H1 (cell line): ENCODE measurements at regions of chr3 and their contacts with region 1.

Region 1: GRCh38 chr3:120469447-120469846 is 18.7 kb upstream of the FSTL1 start:
- DNase-seq: no peak
- H3K4me3 ChIP-seq: peak overlapping the region in 2 of 4 experiments; percentile 7 to 10; a peak in 1 of 8 replicates
- H3K27ac ChIP-seq: peak overlapping the region; percentile 64
- H3K4me1 ChIP-seq: peaks cover 5 to 20% (median 10%) of the 10 kb centered on the region in 4 experiments; a peak in 5 of 7 replicates
- H3K27me3 ChIP-seq: no peaks in the 10 kb centered on the region
- CTCF ChIP-seq: no peak
- EP300 ChIP-seq: peak in 1 of 2 experiments; percentile 87; a peak in 1 of 3 replicates
- POLR2A ChIP-seq: no peak
- RAD21 ChIP-seq: no peak

Region 2: DNA sequence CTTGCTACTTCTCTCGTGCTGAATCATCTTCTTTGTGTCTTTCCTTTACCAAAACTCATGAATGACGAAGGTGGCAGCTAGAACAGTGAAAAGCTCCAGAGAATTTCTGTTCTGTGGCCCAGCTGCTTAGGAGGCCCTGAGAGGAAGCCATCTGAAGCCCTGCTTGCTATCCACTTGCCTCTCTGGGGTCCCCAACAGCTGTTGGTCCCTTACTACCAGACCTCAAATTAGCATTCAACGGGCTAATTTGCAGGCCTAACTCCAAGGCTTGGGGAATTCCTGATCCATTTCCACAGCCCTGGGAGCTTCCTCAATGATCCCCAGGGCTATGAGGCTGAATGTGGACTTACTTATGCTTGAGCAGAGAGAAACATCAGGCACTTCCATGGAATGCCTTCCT is 18.8 kb after region 1 on chr3:
- CTCF ChIA-PET with region 1: interaction called, 3 read pairs
- POLR2A ChIA-PET with region 1: interaction called, 16 read pairs
- DNase-seq: no peak
- H3K4me3 ChIP-seq: no peak overlapping the region
- H3K27ac ChIP-seq: no peak overlapping the region
- H3K4me1 ChIP-seq: peaks cover 0 to 8% (median 5%) of the 10 kb centered on the region in 4 experiments; a peak in 2 of 7 replicates
- H3K27me3 ChIP-seq: no peaks in the 10 kb centered on the region
- CTCF ChIP-seq: no peak
- EP300 ChIP-seq: no peak
- POLR2A ChIP-seq: no peak
- RAD21 ChIP-seq: no peak

Region 3: DNA sequence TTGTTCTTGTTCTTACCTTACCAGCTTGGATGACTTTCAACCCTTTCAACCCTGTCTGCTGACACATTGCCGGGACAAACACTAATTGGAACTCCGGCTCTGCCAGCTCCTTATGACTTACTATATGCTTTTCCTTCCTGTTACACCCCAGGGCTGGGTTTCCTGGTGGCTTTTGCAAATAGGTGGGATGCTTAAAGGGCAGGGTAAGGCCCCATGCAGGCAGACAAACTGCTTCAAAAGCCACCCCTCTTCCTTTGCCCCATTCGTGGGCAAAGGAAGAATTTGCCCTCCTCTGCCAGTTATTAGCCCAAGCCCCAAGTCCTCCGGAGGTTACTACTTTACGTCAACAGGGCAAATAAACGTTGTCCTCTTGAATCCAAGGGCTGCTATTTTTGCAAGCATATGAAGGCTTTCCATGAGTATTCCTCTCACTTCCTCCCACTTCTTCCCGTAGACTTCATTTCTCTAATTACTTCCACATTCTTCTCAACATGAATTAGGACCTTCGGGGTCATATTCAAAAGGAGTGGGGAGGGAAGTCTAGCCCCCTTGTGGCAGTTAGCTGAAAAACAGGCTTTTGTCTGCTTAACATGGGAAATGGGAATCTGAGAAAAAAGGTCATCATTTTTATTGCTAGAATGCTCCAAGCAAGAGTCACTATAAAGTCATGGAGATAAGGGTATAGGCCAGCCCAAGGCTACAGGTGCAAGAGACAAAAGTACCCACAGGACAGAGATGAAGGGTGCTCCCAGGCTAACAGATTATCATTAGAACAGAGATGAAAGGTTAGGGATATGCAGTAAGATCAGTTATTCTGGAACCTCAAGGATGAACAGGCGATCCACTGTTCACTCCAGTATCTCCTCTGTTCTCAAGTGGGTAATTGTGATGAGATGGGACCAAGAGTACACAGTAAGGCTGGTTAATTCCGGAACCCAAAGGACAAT is 37.7 kb after region 1 on chr3:
- CTCF ChIA-PET with region 1: interaction called, 12 read pairs
- POLR2A ChIA-PET with region 1: interaction called, 11 read pairs
- DNase-seq: peak in 1 of 2 experiments; percentile 59
- H3K4me3 ChIP-seq: no peak overlapping the region
- H3K27ac ChIP-seq: no peak overlapping the region
- H3K4me1 ChIP-seq: peaks cover 4 to 17% (median 9%) of the 10 kb centered on the region in 4 experiments
- H3K27me3 ChIP-seq: no peaks in the 10 kb centered on the region
- CTCF ChIP-seq: peak in 2 of 3 experiments; percentile 48 to 63; a peak in 3 of 4 replicates
- EP300 ChIP-seq: no peak
- POLR2A ChIP-seq: no peak
- RAD21 ChIP-seq: peak; percentile 57 to 64

Region 4: DNA sequence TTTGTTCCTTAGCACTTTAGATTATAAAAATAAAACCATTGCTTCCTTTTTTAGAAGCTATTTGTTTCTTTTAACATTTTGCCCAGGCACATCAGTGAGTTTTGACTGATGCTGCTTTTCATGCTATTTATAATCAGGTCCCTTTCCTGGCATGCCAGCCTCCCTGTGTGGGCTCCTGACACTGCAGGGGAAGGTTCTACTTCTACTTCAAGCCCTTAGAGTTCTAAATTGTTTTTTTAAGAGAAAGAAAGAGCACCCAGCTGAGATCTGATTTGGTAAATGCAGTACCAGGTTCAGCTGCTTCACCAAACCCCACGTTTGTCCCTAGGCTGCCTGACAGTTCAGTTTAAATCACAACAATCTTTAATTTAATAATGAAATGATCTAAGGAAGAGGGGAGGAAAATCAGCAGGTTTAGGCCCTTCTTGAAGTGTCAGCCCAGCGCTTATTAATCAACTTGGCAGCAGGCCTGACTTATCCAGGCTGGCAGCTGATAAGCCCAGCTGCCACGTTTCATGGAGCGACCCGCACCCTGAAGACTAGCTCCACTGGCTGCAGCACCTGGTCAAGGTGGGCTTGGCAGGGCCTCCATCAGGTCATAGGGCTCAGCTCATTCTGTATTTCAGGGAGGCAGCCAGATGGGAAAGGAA is 183.6 kb after region 1 on chr3:
- CTCF ChIA-PET with region 1: no interaction called
- POLR2A ChIA-PET with region 1: no interaction called
- DNase-seq: no peak
- H3K4me3 ChIP-seq: no peak overlapping the region
- H3K27ac ChIP-seq: no peak overlapping the region
- H3K4me1 ChIP-seq: no peaks in the 10 kb centered on the region; a peak in 2 of 7 replicates
- H3K27me3 ChIP-seq: no peaks in the 10 kb centered on the region
- CTCF ChIP-seq: no peak
- EP300 ChIP-seq: no peak
- POLR2A ChIP-seq: no peak
- RAD21 ChIP-seq: no peak

Region 5: DNA sequence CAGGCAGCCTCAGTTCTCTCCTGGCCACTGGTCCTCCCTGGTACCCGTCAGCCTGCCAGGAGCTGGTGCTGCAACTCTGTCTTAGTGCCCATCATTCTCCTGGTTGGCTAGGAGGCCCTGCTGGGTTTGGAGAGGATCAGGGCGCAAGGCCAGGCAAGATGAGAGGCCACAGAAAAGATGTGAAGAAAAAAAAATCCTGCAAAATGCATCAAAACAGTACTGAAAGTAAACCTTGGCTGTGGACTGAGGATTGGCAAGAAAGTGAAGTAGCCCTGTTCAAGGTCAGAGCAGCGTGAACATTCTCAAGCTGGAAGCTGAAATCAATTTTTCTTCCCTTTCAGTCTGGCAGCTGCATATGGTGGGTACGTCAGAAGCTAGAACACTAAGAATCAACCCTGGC is 347.3 kb after region 1 on chr3:
- CTCF ChIA-PET with region 1: no interaction called
- POLR2A ChIA-PET with region 1: no interaction called
- DNase-seq: no peak
- H3K4me3 ChIP-seq: no peak overlapping the region
- H3K27ac ChIP-seq: no peak overlapping the region
- H3K4me1 ChIP-seq: no peaks in the 10 kb centered on the region
- H3K27me3 ChIP-seq: no peaks in the 10 kb centered on the region
- CTCF ChIP-seq: no peak
- EP300 ChIP-seq: no peak
- POLR2A ChIP-seq: no peak
- RAD21 ChIP-seq: no peak